Motor neuron (in vitro differentiated cells): ENCODE measurements at regions of chr9 and their contacts with region 1.

Region 1: GRCh38 chr9:18014556-18014955 is 435.7 kb downstream of the SH3GL2 start:
- ATAC-seq: peak in 5 of 8 experiments; percentile 8 to 95 (median 58)
- H3K4me3 ChIP-seq: no peak overlapping the region
- H3K27ac ChIP-seq: no peak overlapping the region
- H3K4me1 ChIP-seq: no peaks in the 10 kb centered on the region

Region 2: GRCh38 chr9:17837965-17838364 is 176.6 kb before region 1 on chr9:
- in situ Hi-C with region 1: loop called in 1 of 9 experiments (anchors 25 kb)
- ATAC-seq: peak in 2 of 8 experiments; percentile 32 to 46
- H3K4me3 ChIP-seq: no peak overlapping the region
- H3K27ac ChIP-seq: no peak overlapping the region
- H3K4me1 ChIP-seq: no peaks in the 10 kb centered on the region

Region 3: GRCh38 chr9:17888066-17888465 is 126.5 kb before region 1 on chr9:
- in situ Hi-C with region 1: no loop called
- ATAC-seq: no peak
- H3K4me3 ChIP-seq: no peak overlapping the region
- H3K27ac ChIP-seq: no peak overlapping the region
- H3K4me1 ChIP-seq: no peaks in the 10 kb centered on the region